GM13976 (cell line): ENCODE measurements at regions of chr6 and their contacts with region 1.

Region 1: GRCh38 chr6:139219746-139220145 is 72.1 kb downstream of the TXLNB start:
- DNase-seq: no peak
- CTCF ChIP-seq: no peak

Region 2: DNA sequence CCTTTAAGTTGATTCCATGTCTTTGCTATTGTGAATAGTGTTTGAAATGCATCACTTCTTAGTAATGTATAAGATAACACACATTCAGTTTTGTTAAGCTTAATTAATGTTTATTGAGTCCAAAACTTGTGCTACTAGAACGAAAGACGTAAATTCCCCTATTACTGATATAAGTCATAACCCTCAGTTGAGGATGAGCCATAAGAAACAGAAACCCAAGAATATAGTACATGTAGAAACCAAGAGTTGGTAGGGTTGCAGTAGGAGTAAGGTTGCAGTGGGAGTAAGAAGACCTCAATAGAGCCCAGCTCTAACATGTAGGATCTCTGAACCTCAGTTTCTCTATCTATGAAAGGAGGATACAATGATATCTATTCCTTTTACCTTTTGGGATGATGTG is 135.4 kb after region 1 on chr6:
- in situ Hi-C with region 1: loop called (anchors 10 kb)
- DNase-seq: no peak
- CTCF ChIP-seq: no peak